MCF 10A (cell line): ENCODE measurements at regions of chr1 and their contacts with region 1.

Region 1: GRCh38 chr1:108852221-108852975 is 4.5 kb downstream of the AKNAD1 start:
- DNase-seq: no peak
- H3K4me3 Mint-ChIP-seq: no peak overlapping the region
- H3K27ac Mint-ChIP-seq: no peak overlapping the region
- H3K4me1 Mint-ChIP-seq: peaks cover 20% of the 10 kb centered on the region
- H3K27me3 Mint-ChIP-seq: no peaks in the 10 kb centered on the region
- CTCF ChIP-seq: no peak

Region 2: DNA sequence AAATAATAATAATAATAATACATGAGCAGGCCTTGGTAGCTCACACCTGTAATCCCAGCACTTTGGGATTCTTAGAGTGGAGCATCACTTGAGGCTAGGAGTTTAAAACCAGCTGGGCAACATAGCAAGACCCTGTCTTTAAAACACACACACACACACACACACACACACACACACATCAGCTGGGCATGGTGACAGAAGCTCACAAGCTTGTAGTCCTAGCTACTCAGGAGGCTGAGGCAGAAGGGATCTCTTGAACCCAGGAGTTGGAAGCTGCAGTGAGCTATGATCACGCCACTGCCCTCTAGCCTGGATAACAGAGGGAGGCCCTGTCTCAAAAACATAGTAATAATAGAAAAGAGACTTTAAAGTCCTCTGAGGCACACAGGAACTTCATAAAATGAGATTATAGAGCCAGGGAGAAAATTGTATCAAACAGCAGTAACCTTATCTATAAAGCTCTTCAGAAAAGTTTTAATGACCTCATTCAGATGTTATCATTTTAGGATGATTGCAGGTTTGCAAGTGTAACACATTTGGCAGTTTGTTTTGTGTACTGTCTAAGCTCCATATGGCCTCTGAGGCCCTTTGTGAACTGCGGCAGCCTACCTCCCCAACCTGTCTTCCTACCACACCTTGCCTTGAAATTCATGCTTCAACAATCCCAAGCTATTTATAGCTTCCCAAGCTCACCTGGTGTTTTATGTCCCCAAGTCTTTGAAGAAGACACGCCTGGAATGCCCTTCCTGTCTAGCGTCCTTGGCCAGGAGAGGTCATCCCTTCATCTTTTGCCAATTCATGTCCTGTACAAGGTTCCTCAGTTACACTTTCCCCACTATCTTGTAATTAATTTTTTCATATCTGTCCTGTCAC is 12.9 kb after region 1 on chr1:
- CTCF ChIA-PET with region 1: interaction called, 10 read pairs
- POLR2A ChIA-PET with region 1: interaction called, 7 read pairs
- intact Hi-C with region 1: no loop called
- DNase-seq: no peak
- H3K4me3 Mint-ChIP-seq: no peak overlapping the region
- H3K27ac Mint-ChIP-seq: no peak overlapping the region
- H3K4me1 Mint-ChIP-seq: no peaks in the 10 kb centered on the region
- H3K27me3 Mint-ChIP-seq: no peaks in the 10 kb centered on the region
- CTCF ChIP-seq: no peak